HAP-1 (cell line): ENCODE measurements at regions of chr1 and their contacts with region 1.

Region 1: DNA sequence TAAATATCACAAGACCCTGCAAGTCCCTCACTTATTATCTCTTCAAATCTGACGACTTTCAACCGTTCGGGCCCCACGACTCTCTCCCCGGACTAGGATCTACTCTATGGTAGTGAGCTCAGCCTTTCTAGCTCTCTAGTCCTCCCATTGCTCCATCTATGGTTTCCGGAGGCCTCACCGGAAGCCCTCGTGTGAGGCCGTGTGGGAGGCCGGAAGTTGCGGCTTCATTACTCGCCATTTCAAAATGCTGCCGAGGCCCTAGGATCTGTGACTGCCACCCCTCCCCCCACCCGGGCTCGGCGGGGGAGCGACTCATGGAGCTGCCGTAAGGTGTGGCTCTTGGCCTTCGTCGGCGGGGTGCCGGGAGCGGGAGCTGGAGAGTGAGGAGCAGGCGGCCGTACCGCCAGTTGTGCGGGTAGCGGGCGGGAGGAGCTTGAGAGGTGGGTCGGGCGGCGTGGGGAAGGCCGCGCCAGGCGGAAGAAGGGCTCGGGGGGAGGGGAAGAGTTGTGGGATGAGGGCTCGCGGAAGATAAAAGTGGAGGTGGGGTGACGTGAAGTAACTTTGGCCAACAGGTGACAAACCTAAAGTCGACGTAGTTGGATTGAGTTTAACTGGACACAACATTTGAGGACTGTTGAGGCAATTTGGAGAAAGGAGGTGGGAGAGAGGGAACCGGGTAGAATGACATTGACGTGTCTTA is at the start of gene MDM4:
- DNase-seq: peak; percentile 93 to 94
- H3K4me3 ChIP-seq: peak within 1 kb of the TSS; percentile 99
- H3K4me1 ChIP-seq: peaks cover 10% of the 10 kb centered on the region
- H3K27me3 ChIP-seq: no peaks in the 10 kb centered on the region

Region 2: GRCh38 chr1:203861379-203862184 is 654.7 kb before region 1 on chr1 and contains the start of gene SNRPE:
- in situ Hi-C with region 1: loop called (anchors 25 kb)
- DNase-seq: peak; percentile 96
- H3K4me3 ChIP-seq: peak within 1 kb of the TSS; percentile 97
- H3K4me1 ChIP-seq: peaks cover 23% of the 10 kb centered on the region
- H3K27me3 ChIP-seq: no peaks in the 10 kb centered on the region

Region 3: DNA sequence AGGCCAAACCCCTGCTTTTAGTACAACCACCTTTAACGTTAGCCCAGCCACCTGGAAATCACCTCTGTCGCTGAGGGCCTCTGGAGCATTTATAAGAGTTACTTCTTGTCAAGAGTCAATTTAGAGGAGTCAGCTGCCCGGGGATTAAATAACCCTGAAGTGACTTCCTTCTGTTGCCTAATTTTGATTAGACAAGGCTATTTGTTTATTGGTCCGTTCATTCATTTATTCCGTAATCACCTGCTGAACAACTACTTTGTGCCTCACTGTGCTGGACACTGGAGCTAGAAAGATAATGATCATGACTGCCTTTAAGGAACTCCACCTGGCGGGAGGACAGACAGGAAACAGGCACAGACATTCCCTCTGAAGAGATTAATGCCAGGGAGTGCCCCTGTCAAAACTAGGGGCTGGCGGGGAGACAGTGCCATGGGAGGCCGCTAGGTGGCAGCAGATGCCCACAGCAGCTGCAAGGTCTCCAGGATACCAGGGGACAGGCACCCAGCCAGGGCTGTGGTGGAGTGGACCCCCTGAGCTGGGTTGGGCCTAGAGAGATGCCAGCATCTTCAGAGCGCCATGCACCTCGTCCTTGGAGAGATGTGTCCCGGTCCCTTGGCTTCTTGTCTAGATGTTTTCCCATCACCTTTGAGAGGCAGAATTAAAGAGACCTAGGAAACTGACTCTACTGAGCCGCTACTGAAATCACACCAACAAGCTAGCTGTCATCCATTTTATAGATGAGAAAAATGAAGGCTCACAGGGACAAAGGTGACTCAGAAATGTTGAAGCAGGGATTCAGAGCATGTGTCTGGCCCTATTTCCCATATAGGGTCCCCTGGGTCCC is 353.9 kb before region 1 on chr1:
- in situ Hi-C with region 1: loop called (anchors 25 kb)
- DNase-seq: peak; percentile 50 to 87
- H3K4me3 ChIP-seq: no peak overlapping the region
- H3K4me1 ChIP-seq: no peaks in the 10 kb centered on the region
- H3K27me3 ChIP-seq: no peaks in the 10 kb centered on the region